ENCODE measurements at regions of chr6 and their contacts with region 1.

Region 1: GRCh38 chr6:53544470-53545308 is at the start of gene GCLC:
- DNase-seq: peak; percentile 94
- H3K4me3 Mint-ChIP-seq: peak within 1 kb of the TSS; percentile 90
- H3K27ac Mint-ChIP-seq: peak within 1 kb of the TSS; percentile 93
- H3K4me1 Mint-ChIP-seq: peaks cover 12% of the 10 kb centered on the region
- H3K27me3 Mint-ChIP-seq: no peaks in the 10 kb centered on the region
- CTCF ChIP-seq: peak; percentile 77
- total RNA-seq, gene GCLC: 45.7 and 45.9 TPM in 2 replicates

Region 2: GRCh38 chr6:53492860-53493634 is 51.6 kb before region 1 on chr6:
- CTCF ChIA-PET with region 1: interaction called, 4 read pairs
- intact Hi-C with region 1: loop called (anchors 5 kb)
- DNase-seq: no peak
- H3K4me3 Mint-ChIP-seq: peak overlapping the region; percentile 30
- H3K27ac Mint-ChIP-seq: no peak overlapping the region
- H3K4me1 Mint-ChIP-seq: peaks cover 19% of the 10 kb centered on the region
- H3K27me3 Mint-ChIP-seq: no peaks in the 10 kb centered on the region
- CTCF ChIP-seq: peak; percentile 22

Region 3: GRCh38 chr6:53593001-53593488 is 48.4 kb after region 1 on chr6:
- CTCF ChIA-PET with region 1: no interaction called
- intact Hi-C with region 1: no loop called
- DNase-seq: no peak
- H3K4me3 Mint-ChIP-seq: no peak overlapping the region
- H3K27ac Mint-ChIP-seq: no peak overlapping the region
- H3K4me1 Mint-ChIP-seq: peaks cover 8% of the 10 kb centered on the region
- H3K27me3 Mint-ChIP-seq: no peaks in the 10 kb centered on the region
- CTCF ChIP-seq: no peak

Measured in Calu3 (cell line).